SK-N-SH (cell line): ENCODE measurements at regions of chr20 and their contacts with region 1.

Region 1: DNA sequence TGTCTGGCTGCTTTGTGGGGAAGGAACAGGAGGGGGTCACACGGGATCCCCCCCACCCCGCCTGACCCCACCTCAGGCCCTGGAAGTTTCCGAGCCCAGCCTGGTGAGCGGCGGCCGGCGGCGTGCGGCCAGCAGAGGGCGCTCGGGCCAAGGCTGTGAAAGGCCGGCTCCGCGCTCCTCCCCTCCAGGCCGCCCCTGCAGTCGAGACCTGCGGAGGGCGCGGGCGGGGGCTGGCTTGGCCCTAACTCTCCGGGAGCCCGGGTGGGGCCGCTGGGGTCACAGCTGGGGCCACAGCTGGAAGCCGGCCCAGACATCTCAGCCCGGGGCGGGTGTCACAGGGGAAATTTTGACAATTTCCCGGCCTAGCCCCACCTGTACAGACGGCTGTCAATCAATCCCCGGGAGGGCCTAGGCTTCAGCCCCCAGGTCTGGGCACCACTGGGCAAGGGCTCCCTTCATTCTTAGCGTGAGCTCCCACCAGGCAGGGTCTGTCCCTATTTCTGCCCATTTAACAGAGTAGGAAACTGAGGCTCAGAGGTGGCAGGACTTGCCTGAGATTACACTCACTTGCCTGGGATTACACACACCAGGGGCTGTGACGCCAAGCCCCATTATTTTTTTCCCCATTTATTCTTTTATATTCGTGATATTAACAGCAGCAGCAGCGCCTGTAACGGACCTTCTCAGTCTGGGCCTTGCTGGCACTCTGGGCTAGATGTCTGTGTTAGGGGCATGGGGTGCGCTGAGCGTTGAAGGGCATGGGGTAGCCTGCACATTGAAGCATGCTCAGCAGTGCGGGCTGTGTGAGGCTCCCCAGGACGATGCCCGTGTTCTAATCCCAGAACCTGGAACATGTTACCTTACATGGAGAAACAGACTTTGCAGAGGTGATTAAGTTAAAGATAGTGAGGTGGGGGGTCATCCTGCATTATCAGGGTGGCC is 23.0 kb downstream of the ZBP1 start:
- DNase-seq: peak; percentile 94
- H3K4me3 ChIP-seq: peak overlapping the region in 1 of 2 experiments; percentile 18; a peak in 1 of 4 replicates
- H3K27ac ChIP-seq: no peak overlapping the region
- H3K4me1 ChIP-seq: peaks cover 0 to 9% of the 10 kb centered on the region in 2 experiments; a peak in 1 of 4 replicates
- H3K27me3 ChIP-seq: no peaks in the 10 kb centered on the region
- CTCF ChIP-seq: peak; percentile 83
- EP300 ChIP-seq: no peak
- RAD21 ChIP-seq: peak; percentile 82

Region 2: GRCh38 chr20:57582432-57583305 is 14.6 kb before region 1 on chr20:
- CTCF ChIA-PET with region 1: interaction called, 24 read pairs
- POLR2A ChIA-PET with region 1: no interaction called
- DNase-seq: peak; percentile 74
- H3K4me3 ChIP-seq: no peak overlapping the region; a peak in 1 of 4 replicates
- H3K27ac ChIP-seq: no peak overlapping the region
- H3K4me1 ChIP-seq: no peaks in the 10 kb centered on the region; a peak in 1 of 4 replicates
- H3K27me3 ChIP-seq: peaks cover 7% of the 10 kb centered on the region; the same call in 1 of the 2 replicates
- CTCF ChIP-seq: peak; percentile 45
- EP300 ChIP-seq: no peak
- RAD21 ChIP-seq: peak; percentile 44

Region 3: GRCh38 chr20:57622579-57623377 is 25.5 kb after region 1 on chr20:
- CTCF ChIA-PET with region 1: interaction called, 50 read pairs
- POLR2A ChIA-PET with region 1: no interaction called
- DNase-seq: peak; percentile 84
- H3K4me3 ChIP-seq: no peak overlapping the region
- H3K27ac ChIP-seq: no peak overlapping the region
- H3K4me1 ChIP-seq: peaks cover 0 to 10% of the 10 kb centered on the region in 2 experiments; a peak in 1 of 4 replicates
- H3K27me3 ChIP-seq: no peaks in the 10 kb centered on the region
- CTCF ChIP-seq: peak; percentile 78
- EP300 ChIP-seq: no peak
- RAD21 ChIP-seq: peak; percentile 87

Region 4: DNA sequence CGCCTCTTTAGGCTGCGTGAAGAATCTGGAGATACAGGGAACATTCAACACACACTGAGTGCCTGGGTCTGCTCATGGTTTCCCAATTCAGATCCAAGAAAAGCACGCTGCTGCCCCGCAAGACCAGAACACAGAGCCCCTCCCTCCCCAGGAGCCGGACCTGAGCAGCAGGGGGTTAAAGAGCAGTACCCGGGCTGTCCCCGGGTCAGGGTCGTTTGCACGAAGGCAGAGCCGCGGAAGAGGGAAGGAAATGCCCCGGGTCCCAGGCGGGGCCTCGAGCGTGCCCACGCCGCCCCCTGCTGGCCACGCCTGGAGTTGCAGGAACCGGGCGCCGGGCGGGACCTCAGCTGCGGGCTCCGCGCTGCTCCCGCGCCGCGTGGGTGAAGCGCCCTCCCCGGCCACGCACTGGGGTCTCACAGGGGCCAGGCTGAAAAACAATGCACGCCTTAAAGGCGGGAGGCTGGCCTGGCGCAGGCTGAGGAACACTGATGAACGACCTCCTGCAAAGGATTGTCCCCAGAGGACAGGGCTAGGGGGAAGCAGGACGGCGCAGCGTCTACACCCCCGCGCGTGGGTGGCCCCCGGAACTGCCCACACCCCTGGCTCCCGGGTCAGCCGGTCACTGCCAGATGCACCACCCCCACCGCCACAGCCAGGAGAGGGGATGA is 582.3 kb after region 1 on chr20:
- CTCF ChIA-PET with region 1: interaction called, 14 read pairs
- POLR2A ChIA-PET with region 1: no interaction called
- DNase-seq: peak; percentile 92
- H3K4me3 ChIP-seq: peak overlapping the region; percentile 36 to 41; a peak in 3 of 4 replicates
- H3K27ac ChIP-seq: peak overlapping the region in 1 of 2 experiments; percentile 58; a peak in 1 of 4 replicates
- H3K4me1 ChIP-seq: peaks cover 0 to 47% of the 10 kb centered on the region in 2 experiments; a peak in 2 of 4 replicates
- H3K27me3 ChIP-seq: no peaks in the 10 kb centered on the region
- CTCF ChIP-seq: peak; percentile 95
- EP300 ChIP-seq: no peak
- RAD21 ChIP-seq: peak; percentile 92